CD8-positive, alpha-beta T cell (primary cell): ENCODE measurements at regions of chr17 and their contacts with region 1.

Region 1: GRCh38 chr17:67441052-67441927 is 64.2 kb downstream of the PITPNC1 start:
- DNase-seq: peak; percentile 61 to 95 (median 79)
- ATAC-seq: peak; percentile 82
- H3K4me3 ChIP-seq: peak overlapping the region; percentile 38 to 47
- H3K4me3 Mint-ChIP-seq: peak overlapping the region; percentile 71
- H3K27ac ChIP-seq: peak overlapping the region; percentile 84 to 98
- H3K27ac Mint-ChIP-seq: peak overlapping the region; percentile 95
- H3K4me1 ChIP-seq: peaks cover 86% of the 10 kb centered on the region
- H3K4me1 Mint-ChIP-seq: peaks cover 83% of the 10 kb centered on the region
- H3K27me3 ChIP-seq: no peaks in the 10 kb centered on the region
- H3K27me3 Mint-ChIP-seq: no peaks in the 10 kb centered on the region
- CTCF ChIP-seq: no peak

Region 2: DNA sequence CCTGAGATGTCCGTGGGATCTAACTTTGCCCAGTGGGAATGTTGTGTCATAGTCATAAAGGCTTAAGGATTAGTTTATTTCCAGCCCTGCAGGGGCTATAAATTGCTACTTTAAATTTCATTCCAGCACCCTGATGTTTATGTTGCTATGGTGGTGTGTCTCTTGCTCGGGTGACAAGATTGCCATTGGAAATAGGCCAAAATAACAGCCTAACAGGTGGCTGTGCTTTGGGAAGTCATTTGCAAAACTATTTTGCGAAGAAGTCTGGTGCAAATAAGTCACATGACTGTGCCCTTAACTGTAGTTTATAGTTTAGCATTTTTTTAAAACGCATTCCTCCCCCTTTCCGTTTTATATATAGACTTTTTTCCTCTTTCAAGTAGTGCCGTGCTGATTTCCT is 41.1 kb before region 1 on chr17:
- CTCF ChIA-PET with region 1: no interaction called
- POLR2A ChIA-PET with region 1: interaction called, 7 read pairs
- intact Hi-C with region 1: loop called (anchors 2 to 5 kb)
- DNase-seq: peak in 2 of 9 experiments; percentile 55 to 81
- ATAC-seq: peak; percentile 24
- H3K4me3 ChIP-seq: peak overlapping the region in 1 of 2 experiments; percentile 8
- H3K4me3 Mint-ChIP-seq: peak overlapping the region; percentile 71
- H3K27ac ChIP-seq: peak overlapping the region; percentile 39 to 78
- H3K27ac Mint-ChIP-seq: peak overlapping the region; percentile 92
- H3K4me1 ChIP-seq: peaks cover 76% of the 10 kb centered on the region
- H3K4me1 Mint-ChIP-seq: peaks cover 82% of the 10 kb centered on the region
- H3K27me3 ChIP-seq: no peaks in the 10 kb centered on the region
- H3K27me3 Mint-ChIP-seq: no peaks in the 10 kb centered on the region
- CTCF ChIP-seq: no peak

Region 3: GRCh38 chr17:67452681-67453554 is 11.6 kb after region 1 on chr17:
- CTCF ChIA-PET with region 1: interaction called, 18 read pairs
- POLR2A ChIA-PET with region 1: interaction called, 67 read pairs
- intact Hi-C with region 1: loop called (anchors 1 kb)
- DNase-seq: peak in 4 of 9 experiments; percentile 50 to 89 (median 66)
- ATAC-seq: peak; percentile 79
- H3K4me3 ChIP-seq: peak overlapping the region in 1 of 2 experiments; percentile 15
- H3K4me3 Mint-ChIP-seq: peak overlapping the region; percentile 77
- H3K27ac ChIP-seq: peak overlapping the region; percentile 59 to 72
- H3K27ac Mint-ChIP-seq: peak overlapping the region; percentile 97
- H3K4me1 ChIP-seq: peaks cover 91% of the 10 kb centered on the region
- H3K4me1 Mint-ChIP-seq: peaks cover 93% of the 10 kb centered on the region
- H3K27me3 ChIP-seq: no peaks in the 10 kb centered on the region
- H3K27me3 Mint-ChIP-seq: no peaks in the 10 kb centered on the region
- CTCF ChIP-seq: no peak

Region 4: GRCh38 chr17:67469208-67469895 is 28.1 kb after region 1 on chr17:
- CTCF ChIA-PET with region 1: interaction called, 84 read pairs
- POLR2A ChIA-PET with region 1: interaction called, 43 read pairs
- intact Hi-C with region 1: loop called in 1 of 2 experiments (anchors 2 kb)
- DNase-seq: peak in 6 of 9 experiments; percentile 20 to 64 (median 40)
- ATAC-seq: peak; percentile 85
- H3K4me3 ChIP-seq: peak overlapping the region; percentile 28 to 33
- H3K4me3 Mint-ChIP-seq: peak overlapping the region; percentile 80
- H3K27ac ChIP-seq: peak overlapping the region; percentile 53 to 61
- H3K27ac Mint-ChIP-seq: peak overlapping the region; percentile 93
- H3K4me1 ChIP-seq: peaks cover 71% of the 10 kb centered on the region
- H3K4me1 Mint-ChIP-seq: peaks cover 72% of the 10 kb centered on the region
- H3K27me3 ChIP-seq: no peaks in the 10 kb centered on the region
- H3K27me3 Mint-ChIP-seq: no peaks in the 10 kb centered on the region
- CTCF ChIP-seq: no peak

Region 5: DNA sequence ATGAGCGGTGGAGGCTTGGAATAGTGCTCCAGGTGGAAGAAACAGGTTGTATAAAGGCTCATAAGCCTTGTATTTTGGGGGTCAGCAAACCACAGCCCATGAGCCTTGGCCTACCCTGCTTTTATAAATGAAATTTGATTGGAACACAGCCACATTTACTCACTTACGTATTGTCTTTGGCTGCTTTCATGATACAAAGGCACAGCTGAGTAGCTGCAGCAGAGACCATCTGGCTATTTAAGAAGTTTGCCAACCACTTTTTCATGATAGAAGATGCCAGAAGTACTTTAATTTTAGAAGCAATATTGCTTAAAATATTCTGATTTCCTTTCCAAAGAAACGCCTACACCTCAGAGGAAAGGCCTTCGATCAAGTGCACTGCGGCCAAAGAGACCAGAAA is 481.2 kb after region 1 on chr17:
- CTCF ChIA-PET with region 1: no interaction called
- POLR2A ChIA-PET with region 1: no interaction called
- intact Hi-C with region 1: no loop called
- DNase-seq: no peak
- ATAC-seq: no peak
- H3K4me3 ChIP-seq: no peak overlapping the region
- H3K4me3 Mint-ChIP-seq: no peak overlapping the region
- H3K27ac ChIP-seq: no peak overlapping the region
- H3K27ac Mint-ChIP-seq: peak overlapping the region; percentile 79
- H3K4me1 ChIP-seq: no peaks in the 10 kb centered on the region
- H3K4me1 Mint-ChIP-seq: no peaks in the 10 kb centered on the region
- H3K27me3 ChIP-seq: no peaks in the 10 kb centered on the region
- H3K27me3 Mint-ChIP-seq: no peaks in the 10 kb centered on the region
- CTCF ChIP-seq: no peak